Tibial artery (tissue), 4 donors: ENCODE measurements at regions of chr7 and their contacts with region 1.

Region 1: GRCh38 chr7:95723592-95724180 is 48.7 kb upstream of the DYNC1I1 start:
- DNase-seq: no peak
- H3K4me3 ChIP-seq: no peak overlapping the region
- H3K27ac ChIP-seq: no peak overlapping the region
- H3K4me1 ChIP-seq: no peaks in the 10 kb centered on the region
- H3K27me3 ChIP-seq: no peaks in the 10 kb centered on the region
- CTCF ChIP-seq: peak; percentile 51 to 74

Region 2: DNA sequence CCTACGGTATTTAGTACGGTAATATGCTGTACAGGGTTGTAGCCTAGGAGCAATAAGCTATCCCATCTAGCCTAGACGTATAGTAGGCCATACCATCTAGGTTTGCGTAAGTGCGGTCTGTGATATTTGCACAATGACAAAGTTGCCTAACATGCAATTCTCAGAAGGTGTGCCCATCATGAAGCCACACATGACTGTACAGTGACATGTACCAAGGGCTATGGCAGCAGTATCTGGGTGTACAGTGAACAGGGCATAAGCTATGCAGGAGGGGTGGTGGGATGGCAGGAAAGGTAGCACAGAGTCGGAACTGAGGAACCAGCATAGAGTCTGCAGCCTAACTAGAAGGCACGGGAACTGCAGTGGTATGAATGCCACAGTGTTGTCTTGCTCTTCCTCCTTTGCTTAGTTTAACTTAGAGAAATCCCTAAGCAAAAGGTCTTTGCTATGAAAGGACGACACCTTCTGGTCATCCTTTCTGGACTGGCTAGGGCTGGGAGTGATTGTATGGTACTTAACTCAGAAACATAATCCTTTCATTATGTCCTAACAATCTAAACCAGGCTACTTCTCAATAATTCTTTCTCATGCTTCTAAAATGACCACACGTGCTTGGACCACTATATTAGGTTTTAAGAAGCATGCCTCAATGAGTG is 142.2 kb after region 1 on chr7:
- intact Hi-C with region 1: loop called (anchors 5 kb)
- DNase-seq: no peak
- H3K4me3 ChIP-seq: no peak overlapping the region
- H3K27ac ChIP-seq: no peak overlapping the region
- H3K4me1 ChIP-seq: peaks cover 0 to 35% (median 12%) of the 10 kb centered on the region in 4 donors
- H3K27me3 ChIP-seq: no peaks in the 10 kb centered on the region
- CTCF ChIP-seq: no peak

Region 3: DNA sequence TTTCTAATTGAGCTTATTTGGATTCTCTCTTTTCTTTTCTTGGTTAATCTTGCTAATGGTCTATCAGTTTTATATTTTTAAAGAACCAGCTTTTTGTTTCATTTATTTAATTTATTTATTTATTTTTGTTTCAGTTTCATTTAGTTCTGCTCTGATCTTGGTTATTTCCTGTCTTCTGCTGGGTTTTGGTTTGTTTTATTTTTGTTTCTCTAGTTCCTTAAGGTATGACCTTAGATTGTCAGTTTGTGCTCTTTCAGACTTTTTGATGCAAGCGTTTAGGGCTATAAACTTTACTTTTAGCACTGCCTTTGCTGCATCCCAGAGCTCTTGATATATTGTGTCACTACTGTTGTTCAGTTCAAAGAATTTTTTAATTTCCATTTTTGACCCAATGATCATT is 747.9 kb after region 1 on chr7:
- intact Hi-C with region 1: no loop called
- DNase-seq: no peak
- H3K4me3 ChIP-seq: no peak overlapping the region
- H3K27ac ChIP-seq: no peak overlapping the region
- H3K4me1 ChIP-seq: no peaks in the 10 kb centered on the region
- H3K27me3 ChIP-seq: no peaks in the 10 kb centered on the region
- CTCF ChIP-seq: no peak